CD8-positive, alpha-beta T cell (primary cell): ENCODE measurements at regions of chr17 and their contacts with region 1.

Region 1: GRCh38 chr17:50425682-50426471 is at the start of gene ACSF2:
- DNase-seq: peak; percentile 39 to 79 (median 67)
- ATAC-seq: peak; percentile 85
- H3K4me3 ChIP-seq: peak within 1 kb of the TSS; percentile 76 to 77
- H3K4me3 Mint-ChIP-seq: peak within 1 kb of the TSS; percentile 87
- H3K27ac ChIP-seq: peak within 1 kb of the TSS; percentile 21 to 75
- H3K27ac Mint-ChIP-seq: peak within 1 kb of the TSS; percentile 79
- H3K4me1 ChIP-seq: peaks cover 28% of the 10 kb centered on the region
- H3K4me1 Mint-ChIP-seq: peaks cover 35% of the 10 kb centered on the region
- H3K27me3 ChIP-seq: no peaks in the 10 kb centered on the region
- H3K27me3 Mint-ChIP-seq: no peaks in the 10 kb centered on the region
- CTCF ChIP-seq: no peak
- total RNA-seq, gene ACSF2: 12.5 to 12.9 TPM

Region 2: GRCh38 chr17:50352072-50352692 is 73.7 kb before region 1 on chr17:
- CTCF ChIA-PET with region 1: no interaction called
- POLR2A ChIA-PET with region 1: no interaction called
- intact Hi-C with region 1: no loop called
- DNase-seq: peak in 1 of 9 experiments; percentile 25
- ATAC-seq: no peak
- H3K4me3 ChIP-seq: no peak overlapping the region
- H3K4me3 Mint-ChIP-seq: no peak overlapping the region
- H3K27ac ChIP-seq: no peak overlapping the region
- H3K27ac Mint-ChIP-seq: no peak overlapping the region
- H3K4me1 ChIP-seq: peaks cover 12% of the 10 kb centered on the region
- H3K4me1 Mint-ChIP-seq: peaks cover 31% of the 10 kb centered on the region
- H3K27me3 ChIP-seq: no peaks in the 10 kb centered on the region
- H3K27me3 Mint-ChIP-seq: no peaks in the 10 kb centered on the region
- CTCF ChIP-seq: no peak

Region 3: DNA sequence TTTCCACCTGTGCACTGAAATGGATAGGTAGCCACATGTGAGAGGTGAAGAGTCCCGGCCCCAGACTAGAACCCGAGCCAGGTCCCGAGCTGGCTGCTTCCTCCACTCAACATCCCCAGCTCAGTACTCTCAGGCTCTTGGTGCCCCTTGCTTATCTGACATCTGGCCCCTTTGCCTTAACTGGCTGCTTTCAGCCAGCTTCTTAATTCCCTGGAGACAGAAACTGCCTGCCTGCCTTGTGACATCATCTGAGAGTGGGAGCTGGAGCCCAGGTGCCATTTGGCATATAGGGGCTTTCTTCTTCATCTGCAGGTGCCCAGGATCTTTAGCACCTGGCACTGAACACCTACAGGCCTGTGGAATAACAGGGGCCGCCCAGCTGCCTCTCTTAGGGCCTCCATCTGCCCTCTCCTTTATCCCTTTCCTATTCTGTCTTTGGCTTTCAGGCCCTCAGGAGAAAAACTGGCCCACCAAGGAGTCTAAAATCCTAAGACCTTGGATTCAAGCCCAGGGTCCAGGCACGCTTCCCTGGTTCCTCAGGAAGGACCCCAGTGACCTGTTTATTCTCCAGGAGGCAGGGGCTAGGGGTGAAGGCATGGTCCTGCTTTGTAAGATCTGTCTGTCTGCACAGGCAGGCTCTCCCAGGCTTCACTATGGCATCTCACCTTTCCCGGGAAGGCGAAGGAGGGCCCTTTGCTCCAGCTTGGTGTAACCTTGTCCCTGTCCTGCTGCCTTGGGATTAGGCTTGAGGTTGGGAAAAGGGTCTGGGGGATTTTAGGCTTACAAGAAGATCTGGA is 34.1 kb after region 1 on chr17:
- CTCF ChIA-PET with region 1: interaction called, 3 read pairs
- POLR2A ChIA-PET with region 1: interaction called, 3 read pairs
- intact Hi-C with region 1: loop called in 1 of 2 experiments (anchors 1 kb)
- DNase-seq: no peak
- ATAC-seq: no peak
- H3K4me3 ChIP-seq: no peak overlapping the region
- H3K4me3 Mint-ChIP-seq: no peak overlapping the region
- H3K27ac ChIP-seq: no peak overlapping the region
- H3K27ac Mint-ChIP-seq: no peak overlapping the region
- H3K4me1 ChIP-seq: no peaks in the 10 kb centered on the region
- H3K4me1 Mint-ChIP-seq: no peaks in the 10 kb centered on the region
- H3K27me3 ChIP-seq: no peaks in the 10 kb centered on the region
- H3K27me3 Mint-ChIP-seq: no peaks in the 10 kb centered on the region
- CTCF ChIP-seq: no peak

Region 4: GRCh38 chr17:50721194-50722010 is 295.5 kb after region 1 on chr17:
- CTCF ChIA-PET with region 1: no interaction called
- POLR2A ChIA-PET with region 1: no interaction called
- intact Hi-C with region 1: no loop called
- DNase-seq: peak in 2 of 9 experiments; percentile 42 to 63
- ATAC-seq: peak; percentile 12
- H3K4me3 ChIP-seq: peak overlapping the region; percentile 87 to 92
- H3K4me3 Mint-ChIP-seq: peak overlapping the region; percentile 98
- H3K27ac ChIP-seq: peak overlapping the region; percentile 93 to 97
- H3K27ac Mint-ChIP-seq: peak overlapping the region; percentile 99
- H3K4me1 ChIP-seq: peaks cover 51% of the 10 kb centered on the region
- H3K4me1 Mint-ChIP-seq: peaks cover 47% of the 10 kb centered on the region
- H3K27me3 ChIP-seq: no peaks in the 10 kb centered on the region
- H3K27me3 Mint-ChIP-seq: no peaks in the 10 kb centered on the region
- CTCF ChIP-seq: no peak